ENCODE measurements at regions of chr4 and their contacts with region 1.

Region 1: GRCh38 chr4:185134307-185134869 is 8.7 kb upstream of the SLC25A4 start:
- DNase-seq: no peak
- ATAC-seq: peak in 6 of 8 donors; percentile 40 to 57 (median 47)
- H3K4me3 ChIP-seq: no peak overlapping the region
- H3K27ac ChIP-seq: peak overlapping the region in 2 of 10 donors; percentile 26 to 30
- H3K4me1 ChIP-seq: peaks cover 0 to 24% (median 14%) of the 10 kb centered on the region in 9 donors
- H3K27me3 ChIP-seq: peaks cover 0 to 6% (median 0%) of the 10 kb centered on the region in 7 donors
- CTCF ChIP-seq: peak; percentile 48 to 86 (median 80)

Region 2: DNA sequence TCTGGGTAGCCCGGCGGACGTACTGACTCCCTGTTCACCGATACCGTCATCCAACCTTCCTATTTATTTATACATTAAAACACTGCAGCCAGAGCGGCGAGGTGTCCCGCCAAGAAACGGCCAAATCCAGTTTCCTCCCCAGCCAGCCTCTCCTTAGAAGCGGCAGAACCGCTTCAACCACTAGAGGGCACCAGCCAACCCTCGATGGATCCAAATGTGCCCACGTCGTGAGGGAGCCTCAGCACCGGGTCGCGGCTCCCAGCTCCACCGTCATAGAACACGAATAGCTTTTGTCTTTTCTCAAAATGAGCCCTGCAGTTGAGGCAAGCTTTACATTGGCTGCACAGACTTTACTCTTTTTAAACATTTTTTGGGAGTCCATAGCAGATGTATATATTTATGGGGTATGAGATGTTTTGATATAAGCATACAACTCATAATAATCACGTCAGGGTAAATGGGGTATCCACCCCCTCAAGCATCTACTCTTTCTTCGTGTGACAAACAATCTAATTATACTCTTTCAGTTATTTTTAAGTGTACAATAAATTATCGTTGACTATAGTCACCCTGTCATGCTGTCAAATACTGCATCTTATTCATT is 129.1 kb before region 1 on chr4:
- intact Hi-C with region 1: loop called in 1 of 10 experiments (anchors 10 kb)
- DNase-seq: peak; percentile 81 to 83
- ATAC-seq: peak; percentile 88 to 96 (median 93)
- H3K4me3 ChIP-seq: peak overlapping the region in 9 of 10 donors; percentile 16 to 42 (median 35)
- H3K27ac ChIP-seq: peak overlapping the region in 2 of 10 donors; percentile 5
- H3K4me1 ChIP-seq: peaks cover 0 to 14% (median 11%) of the 10 kb centered on the region in 9 donors
- H3K27me3 ChIP-seq: peaks cover 0 to 49% (median 15%) of the 10 kb centered on the region in 7 donors
- CTCF ChIP-seq: peak; percentile 76 to 97 (median 95)

Region 3: GRCh38 chr4:185039508-185040273 is 94.7 kb before region 1 on chr4:
- intact Hi-C with region 1: loop called in 9 of 10 experiments (anchors 1 to 10 kb)
- DNase-seq: peak in 1 of 2 donors; percentile 59
- ATAC-seq: peak in 7 of 8 donors; percentile 46 to 86 (median 75)
- H3K4me3 ChIP-seq: peak overlapping the region in 2 of 10 donors; percentile 7 to 24
- H3K27ac ChIP-seq: no peak overlapping the region
- H3K4me1 ChIP-seq: peaks cover 0 to 11% (median 6%) of the 10 kb centered on the region in 9 donors
- H3K27me3 ChIP-seq: peaks cover 0 to 2% (median 0%) of the 10 kb centered on the region in 7 donors
- CTCF ChIP-seq: peak; percentile 62 to 89 (median 81)

Region 4: DNA sequence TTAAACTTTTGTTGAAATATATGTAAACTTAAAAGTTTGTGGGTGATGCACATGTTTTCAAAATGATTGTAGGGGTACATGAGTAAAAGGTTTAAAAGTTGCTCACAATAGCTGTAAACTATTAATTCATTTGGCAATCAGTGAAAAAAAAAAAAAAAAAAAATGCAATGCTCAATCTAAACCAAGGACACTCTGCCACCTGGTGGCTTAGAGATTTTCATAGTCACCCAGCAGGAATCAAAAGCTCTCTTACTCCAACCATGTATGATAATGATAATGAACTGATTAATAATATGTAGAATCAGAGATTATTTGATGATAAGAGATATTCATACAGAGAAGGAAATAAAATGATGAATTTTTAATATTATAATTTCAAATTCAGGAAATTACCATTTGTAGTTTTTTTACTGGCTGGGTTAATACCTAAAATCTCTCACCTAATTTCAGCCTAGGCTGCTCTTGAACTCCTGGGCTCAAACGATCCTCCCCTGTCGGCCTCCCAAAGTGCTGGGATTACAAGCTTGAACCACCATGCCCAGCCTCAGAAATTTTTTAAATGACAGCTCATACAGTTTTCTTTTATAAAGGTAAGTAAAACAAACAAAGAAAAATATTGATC is 38.2 kb before region 1 on chr4:
- intact Hi-C with region 1: loop called in 6 of 10 experiments (anchors 2 to 5 kb)
- DNase-seq: peak in 1 of 2 donors; percentile 63
- ATAC-seq: peak in 2 of 8 donors; percentile 34 to 41
- H3K4me3 ChIP-seq: no peak overlapping the region
- H3K27ac ChIP-seq: no peak overlapping the region
- H3K4me1 ChIP-seq: no peaks in the 10 kb centered on the region
- H3K27me3 ChIP-seq: no peaks in the 10 kb centered on the region
- CTCF ChIP-seq: peak; percentile 15 to 83 (median 61)

Region 5: DNA sequence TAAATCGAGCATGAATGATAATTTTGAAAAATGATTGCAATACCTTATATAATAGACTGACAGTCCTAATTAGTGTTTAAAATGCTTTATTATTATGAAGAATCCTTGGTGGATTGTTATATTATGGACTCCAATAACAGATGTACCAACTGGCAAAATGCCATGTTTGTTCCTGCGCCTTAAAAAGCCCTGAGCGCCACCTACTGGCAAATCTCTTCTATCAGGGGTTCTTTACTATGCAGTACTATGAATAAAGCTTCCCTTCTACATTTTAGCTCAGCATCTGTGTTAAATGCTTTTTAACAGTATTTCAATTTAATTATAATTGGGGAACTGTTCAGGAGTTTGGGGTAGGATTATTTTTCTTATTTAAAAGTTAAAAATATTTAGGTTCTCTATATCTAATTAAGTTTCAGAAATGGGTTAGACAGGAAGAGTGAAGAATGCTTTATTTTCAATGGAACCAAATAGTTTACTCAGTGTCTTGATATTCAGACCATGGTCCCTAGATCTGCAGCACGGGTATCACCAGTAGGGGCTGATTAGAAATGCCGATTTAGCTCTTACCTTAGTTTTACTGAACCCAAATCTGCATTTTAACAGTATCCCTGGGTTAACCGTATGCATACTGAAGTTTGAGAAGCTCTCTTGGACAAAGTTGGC is 49.4 kb after region 1 on chr4:
- intact Hi-C with region 1: loop called in 1 of 10 experiments (anchors 10 kb)
- DNase-seq: peak; percentile 37 to 90
- ATAC-seq: peak; percentile 50 to 90 (median 69)
- H3K4me3 ChIP-seq: no peak overlapping the region
- H3K27ac ChIP-seq: no peak overlapping the region
- H3K4me1 ChIP-seq: peaks cover 0 to 9% (median 0%) of the 10 kb centered on the region in 9 donors
- H3K27me3 ChIP-seq: no peaks in the 10 kb centered on the region
- CTCF ChIP-seq: peak; percentile 74 to 96 (median 88)

Measured in heart right ventricle (tissue), 16 donors.